Common myeloid progenitor, CD34-positive (primary cell): ENCODE measurements at regions of chr1 and their contacts with region 1.

Region 1: DNA sequence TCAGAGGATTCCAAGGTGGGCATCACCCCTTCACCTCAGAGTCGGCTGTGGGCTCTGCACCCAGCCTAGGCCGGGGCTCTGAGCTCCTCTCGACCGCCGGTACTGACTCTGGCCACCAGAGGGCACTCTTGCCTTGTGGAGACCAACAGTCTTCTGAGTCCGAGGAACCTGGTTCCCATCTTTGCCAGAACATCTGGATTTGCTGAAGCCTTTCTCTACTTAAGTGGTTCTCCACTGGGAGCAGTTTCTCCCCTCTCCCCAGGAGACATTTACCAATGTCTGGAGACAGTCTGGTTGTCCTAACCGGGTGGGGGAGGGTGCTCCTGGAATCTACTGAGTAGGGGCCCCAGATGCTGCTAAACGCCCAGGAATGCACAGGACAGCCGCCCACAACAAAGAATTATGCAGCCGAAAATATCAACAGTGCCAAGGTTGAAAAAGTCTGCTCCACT is 9.4 kb downstream of the ETV3L start:
- DNase-seq: peak; percentile 70 to 80 (median 72)
- H3K4me3 ChIP-seq: no peak overlapping the region
- H3K27ac ChIP-seq: no peak overlapping the region
- H3K4me1 ChIP-seq: no peaks in the 10 kb centered on the region
- H3K27me3 ChIP-seq: no peaks in the 10 kb centered on the region

Region 2: GRCh38 chr1:157011845-157012244 is 78.4 kb before region 1 on chr1:
- CTCF ChIA-PET with region 1: no interaction called
- POLR2A ChIA-PET with region 1: no interaction called
- DNase-seq: no peak
- H3K4me3 ChIP-seq: no peak overlapping the region
- H3K27ac ChIP-seq: no peak overlapping the region
- H3K4me1 ChIP-seq: no peaks in the 10 kb centered on the region
- H3K27me3 ChIP-seq: no peaks in the 10 kb centered on the region

Region 3: DNA sequence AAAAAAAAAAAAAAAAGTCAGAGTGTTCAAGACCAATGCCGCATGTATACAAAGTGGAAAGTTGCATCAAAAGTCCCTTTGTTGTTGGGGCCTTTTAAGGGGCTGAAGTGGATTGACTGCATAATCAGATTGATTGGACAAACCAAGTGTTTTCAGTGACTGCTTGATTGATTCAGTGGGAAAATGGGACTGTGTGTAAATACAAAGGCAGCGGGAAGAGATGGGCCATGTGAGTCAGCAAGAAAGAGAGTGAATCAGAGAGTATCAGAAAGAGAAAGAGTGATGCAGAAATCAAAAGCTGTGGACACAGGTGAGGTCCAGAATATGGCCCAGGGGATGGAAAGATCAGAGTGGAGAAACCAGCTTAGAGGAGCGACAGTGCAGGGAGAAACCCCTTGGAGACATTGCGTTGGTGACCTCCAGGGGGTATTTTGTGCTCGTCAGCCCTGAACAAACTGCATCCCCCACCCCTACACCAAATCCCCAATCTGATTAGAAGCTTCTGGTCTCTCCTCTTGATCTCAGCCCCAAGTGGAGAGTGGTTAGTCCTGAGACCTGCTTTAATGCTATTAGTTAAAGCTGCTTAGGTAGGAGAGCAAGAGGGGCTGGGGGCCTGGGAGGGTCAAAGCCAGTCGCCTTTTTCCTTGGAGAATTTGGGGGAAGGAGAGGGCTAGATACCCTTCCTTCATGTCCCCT is 14.5 kb after region 1 on chr1:
- CTCF ChIA-PET with region 1: interaction called, 11 read pairs
- POLR2A ChIA-PET with region 1: no interaction called
- DNase-seq: no peak
- H3K4me3 ChIP-seq: no peak overlapping the region
- H3K27ac ChIP-seq: no peak overlapping the region
- H3K4me1 ChIP-seq: peaks cover 0 to 11% (median 1%) of the 10 kb centered on the region in 4 experiments
- H3K27me3 ChIP-seq: peaks cover 0 to 25% (median 4%) of the 10 kb centered on the region in 5 experiments

Region 4: GRCh38 chr1:157110003-157110402 is 19.8 kb after region 1 on chr1:
- CTCF ChIA-PET with region 1: interaction called, 12 read pairs
- POLR2A ChIA-PET with region 1: no interaction called
- DNase-seq: no peak
- H3K4me3 ChIP-seq: no peak overlapping the region
- H3K27ac ChIP-seq: no peak overlapping the region
- H3K4me1 ChIP-seq: peaks cover 0 to 16% (median 1%) of the 10 kb centered on the region in 4 experiments
- H3K27me3 ChIP-seq: peaks cover 0 to 25% (median 5%) of the 10 kb centered on the region in 5 experiments

Region 5: GRCh38 chr1:157138220-157139051 is 48.2 kb after region 1 on chr1 and contains the start of gene ETV3:
- CTCF ChIA-PET with region 1: interaction called, 17 read pairs
- POLR2A ChIA-PET with region 1: no interaction called
- DNase-seq: peak; percentile 87 to 93 (median 90)
- H3K4me3 ChIP-seq: peak within 1 kb of the TSS; percentile 80 to 97 (median 94)
- H3K27ac ChIP-seq: peak within 1 kb of the TSS; percentile 91 to 96
- H3K4me1 ChIP-seq: peaks cover 21 to 40% (median 27%) of the 10 kb centered on the region in 4 experiments
- H3K27me3 ChIP-seq: no peaks in the 10 kb centered on the region

Region 6: GRCh38 chr1:157156058-157156541 is 65.9 kb after region 1 on chr1:
- CTCF ChIA-PET with region 1: interaction called, 246 read pairs
- POLR2A ChIA-PET with region 1: interaction called, 7 read pairs
- DNase-seq: peak; percentile 69 to 75 (median 70)
- H3K4me3 ChIP-seq: peak overlapping the region in 3 of 7 experiments; percentile 2 to 26 (median 17)
- H3K27ac ChIP-seq: no peak overlapping the region
- H3K4me1 ChIP-seq: peaks cover 0 to 38% (median 27%) of the 10 kb centered on the region in 4 experiments
- H3K27me3 ChIP-seq: no peaks in the 10 kb centered on the region